ENCODE measurements at regions of chr1 and their contacts with region 1.

Region 1: DNA sequence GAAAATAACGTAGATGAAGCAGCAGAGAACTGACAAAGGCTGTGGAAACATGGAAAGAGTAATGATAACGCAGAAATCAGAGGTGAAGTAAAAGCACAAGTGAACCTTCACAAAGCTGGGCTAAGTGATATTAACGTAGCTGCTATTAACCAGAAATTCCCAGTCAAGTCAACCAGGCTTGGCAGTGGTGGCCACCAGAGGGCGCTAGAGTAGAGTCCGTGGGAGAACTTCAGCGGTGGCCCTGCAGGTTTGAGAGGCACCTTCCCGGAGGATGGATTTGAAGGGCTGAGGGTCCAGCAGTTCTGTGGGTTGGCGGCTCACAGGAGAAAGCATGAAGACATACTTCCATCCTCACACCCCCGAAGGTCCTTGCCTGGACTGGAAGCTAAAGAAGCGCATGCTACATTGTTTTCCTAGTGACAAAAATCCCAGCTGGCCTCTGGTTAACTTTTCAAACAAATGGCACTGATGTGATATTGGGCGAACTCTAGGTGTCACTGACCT is 81.7 kb upstream of the ZNF648 start:
- DNase-seq: peak; percentile 91 to 95 (median 92)
- ATAC-seq: peak; percentile 74
- H3K4me3 ChIP-seq: no peak overlapping the region
- H3K27ac ChIP-seq: peak overlapping the region; percentile 84 to 90 (median 86)
- H3K4me1 ChIP-seq: peaks cover 50% of the 10 kb centered on the region
- H3K27me3 ChIP-seq: no peaks in the 10 kb centered on the region
- CTCF ChIP-seq: peak; percentile 65 to 97 (median 95)
- POLR2A ChIP-seq: no peak

Region 2: GRCh38 chr1:182397771-182398393 is 254.7 kb after region 1 on chr1:
- intact Hi-C with region 1: loop called (anchors 5 kb)
- DNase-seq: no peak
- ATAC-seq: no peak
- H3K4me3 ChIP-seq: no peak overlapping the region
- H3K27ac ChIP-seq: peak overlapping the region in 2 of 4 donors; percentile 56 to 69
- H3K4me1 ChIP-seq: peaks cover 11% of the 10 kb centered on the region
- H3K27me3 ChIP-seq: no peaks in the 10 kb centered on the region
- CTCF ChIP-seq: no peak
- POLR2A ChIP-seq: no peak